Motor neuron (in vitro differentiated cells): ENCODE measurements at regions of chr1 and their contacts with region 1.

Region 1: DNA sequence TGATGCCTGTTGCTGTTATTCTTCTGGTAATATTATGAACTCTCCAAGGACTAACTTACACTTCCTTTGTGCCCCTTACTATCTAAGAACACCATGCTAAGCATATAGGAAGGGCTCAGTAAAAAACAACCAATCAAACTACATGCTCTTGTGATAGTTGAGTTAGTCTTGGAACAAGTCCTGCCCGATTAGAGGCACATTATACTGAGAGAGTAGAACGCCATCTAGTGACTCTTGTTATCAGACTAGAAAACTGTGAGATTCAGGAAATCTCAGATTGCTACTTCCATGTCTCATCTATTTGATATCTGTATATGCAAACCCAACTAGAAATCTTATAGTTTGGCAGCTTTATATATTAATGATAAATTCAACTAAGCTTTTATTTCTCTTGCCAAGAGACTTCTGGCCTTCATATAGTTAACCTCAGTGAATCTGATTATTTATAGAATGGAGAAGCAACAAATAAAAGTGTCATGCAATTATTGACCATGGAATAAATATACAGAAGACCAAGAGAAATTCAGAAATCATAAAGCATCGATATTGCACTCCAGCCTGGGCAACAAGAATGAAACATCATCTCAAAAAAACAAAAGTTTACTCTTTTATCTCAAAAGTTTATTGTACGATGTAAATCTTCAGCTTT is 7.8 kb upstream of the SRRM1 start:
- ATAC-seq: peak; percentile 43 to 85 (median 77)
- H3K4me3 ChIP-seq: no peak overlapping the region
- H3K27ac ChIP-seq: no peak overlapping the region
- H3K4me1 ChIP-seq: no peaks in the 10 kb centered on the region

Region 2: DNA sequence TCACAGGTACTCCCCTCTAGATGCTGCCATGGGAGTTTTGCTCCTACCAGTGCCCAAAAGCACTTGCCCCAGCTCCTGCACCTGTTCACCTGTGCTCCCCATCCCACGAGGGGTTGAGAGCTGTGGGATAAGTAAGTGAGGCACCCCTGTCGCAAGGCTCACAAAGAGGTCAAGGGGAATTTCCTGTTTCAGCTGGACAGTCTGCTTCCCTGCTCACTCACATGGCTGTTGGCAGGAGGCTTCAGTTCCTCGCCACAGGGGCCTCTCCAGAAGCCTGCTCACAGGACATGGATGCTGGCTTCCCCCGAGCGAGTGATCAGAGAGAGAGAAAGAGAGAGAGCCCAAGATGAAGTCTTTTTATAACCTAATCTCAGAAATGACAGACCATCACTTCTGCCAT is 88.1 kb before region 1 on chr1:
- in situ Hi-C with region 1: loop called in 1 of 9 experiments (anchors 5 kb)
- ATAC-seq: no peak
- H3K4me3 ChIP-seq: no peak overlapping the region
- H3K27ac ChIP-seq: no peak overlapping the region
- H3K4me1 ChIP-seq: peaks cover 7 to 11% of the 10 kb centered on the region in 2 donors